Activated CD4-positive, alpha-beta T cell treated with anti-CD3 and anti-CD28 coated beads, Interleukin-2, amount 10 ng/mL, durations not matched to agents 24 days and 14 days (primary cell): ENCODE measurements at regions of chr2 and their contacts with region 1.

Region 1: DNA sequence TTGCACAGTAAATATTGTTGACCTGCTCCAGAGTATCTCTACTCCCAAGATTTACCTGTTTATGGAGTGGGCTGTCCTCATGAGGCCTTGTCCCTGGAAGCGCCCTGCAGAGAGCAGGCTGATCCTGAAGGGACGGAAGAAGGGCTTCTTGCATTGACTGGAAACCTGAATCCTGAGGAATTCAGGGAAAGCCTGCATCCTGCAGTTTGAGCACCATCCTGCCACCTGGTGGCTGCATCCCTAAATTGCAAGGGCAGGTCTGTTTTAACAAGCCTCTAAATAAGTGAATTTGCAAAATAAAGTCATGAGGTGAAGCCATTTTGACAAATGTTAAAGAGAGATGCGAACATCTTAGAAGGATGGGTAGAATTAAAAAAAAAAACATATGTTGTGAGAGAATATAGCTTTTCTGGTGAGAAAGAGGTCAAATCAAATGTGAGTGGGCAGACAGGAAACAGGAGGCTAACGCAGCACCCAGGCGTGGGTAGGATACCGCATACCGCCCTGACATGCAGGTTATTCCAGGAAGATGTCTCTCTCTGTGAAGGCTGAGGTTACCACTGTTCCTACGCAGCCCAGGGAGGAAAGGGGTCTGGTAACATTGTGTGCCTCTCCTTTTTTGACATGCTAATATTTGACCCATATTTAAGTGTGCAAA is 754.9 kb downstream of the RNF144A start:
- DNase-seq: peak; percentile 85
- H3K4me3 Mint-ChIP-seq: peak overlapping the region; percentile 70
- H3K27ac Mint-ChIP-seq: peak overlapping the region; percentile 98
- H3K4me1 Mint-ChIP-seq: peaks cover 60% of the 10 kb centered on the region
- H3K27me3 Mint-ChIP-seq: no peaks in the 10 kb centered on the region

Region 2: GRCh38 chr2:7437716-7438632 is 234.2 kb before region 1 on chr2:
- intact Hi-C with region 1: loop called (anchors 1 kb)
- DNase-seq: peak; percentile 75
- H3K4me3 Mint-ChIP-seq: peak overlapping the region; percentile 53
- H3K27ac Mint-ChIP-seq: peak overlapping the region; percentile 96
- H3K4me1 Mint-ChIP-seq: peaks cover 65% of the 10 kb centered on the region
- H3K27me3 Mint-ChIP-seq: no peaks in the 10 kb centered on the region

Region 3: DNA sequence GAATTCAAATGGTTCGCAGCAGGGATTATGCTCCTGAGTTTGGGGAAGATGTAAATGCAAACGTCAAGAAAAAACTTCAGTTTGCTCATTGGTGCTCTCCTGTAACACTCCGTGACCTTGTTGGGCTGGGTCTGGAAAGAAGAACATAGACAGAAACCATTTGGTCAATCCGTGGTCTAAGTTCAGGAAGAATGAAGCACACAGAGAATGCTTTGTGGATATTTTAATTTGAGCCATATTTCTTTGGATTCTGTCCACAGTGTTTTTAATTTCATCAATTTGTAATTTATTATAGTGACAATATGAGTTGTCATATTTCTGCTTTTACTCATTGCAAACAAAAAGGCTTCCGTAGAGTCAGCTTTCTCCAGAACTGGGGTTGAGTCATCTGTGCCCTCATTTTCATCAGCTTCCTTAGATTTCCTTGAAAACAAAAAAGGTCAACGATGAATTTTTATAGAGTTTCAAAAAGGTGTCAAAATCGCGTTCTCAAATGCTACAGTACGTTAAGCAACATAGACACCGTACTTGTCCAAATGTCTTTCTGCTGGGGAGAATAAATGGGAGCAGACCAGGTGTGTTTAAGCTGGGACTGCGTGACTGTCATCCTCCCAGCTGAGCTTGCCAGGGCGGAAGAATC is 148.6 kb before region 1 on chr2:
- intact Hi-C with region 1: loop called (anchors 2 kb)
- DNase-seq: no peak
- H3K4me3 Mint-ChIP-seq: peak overlapping the region; percentile 63
- H3K27ac Mint-ChIP-seq: peak overlapping the region; percentile 98
- H3K4me1 Mint-ChIP-seq: peaks cover 53% of the 10 kb centered on the region
- H3K27me3 Mint-ChIP-seq: no peaks in the 10 kb centered on the region

Region 4: DNA sequence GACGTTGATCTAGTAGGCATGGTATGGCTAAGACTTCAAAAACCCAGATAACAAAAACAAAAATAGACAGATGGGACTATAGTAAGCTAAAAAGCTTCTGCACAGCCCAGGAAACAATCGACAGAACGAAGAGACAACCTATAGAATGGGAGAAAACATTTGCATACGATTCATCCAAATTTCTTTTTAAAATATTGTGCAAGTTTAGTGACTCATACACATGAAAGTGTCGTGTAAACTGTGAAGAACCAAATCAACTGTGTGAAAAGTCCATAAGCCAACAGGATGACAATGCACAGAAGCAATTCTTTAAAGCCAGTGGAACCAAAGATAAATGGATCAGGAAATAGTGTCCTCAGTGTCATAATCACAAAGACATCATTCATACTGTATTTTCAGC is 83.9 kb before region 1 on chr2:
- intact Hi-C with region 1: loop called (anchors 5 kb)
- DNase-seq: peak; percentile 50
- H3K4me3 Mint-ChIP-seq: peak overlapping the region; percentile 2
- H3K27ac Mint-ChIP-seq: peak overlapping the region; percentile 68
- H3K4me1 Mint-ChIP-seq: peaks cover 22% of the 10 kb centered on the region
- H3K27me3 Mint-ChIP-seq: no peaks in the 10 kb centered on the region

Region 5: GRCh38 chr2:7633566-7634153 is 38.5 kb before region 1 on chr2:
- intact Hi-C with region 1: no loop called
- DNase-seq: no peak
- H3K4me3 Mint-ChIP-seq: no peak overlapping the region
- H3K27ac Mint-ChIP-seq: no peak overlapping the region
- H3K4me1 Mint-ChIP-seq: no peaks in the 10 kb centered on the region
- H3K27me3 Mint-ChIP-seq: no peaks in the 10 kb centered on the region

Region 6: DNA sequence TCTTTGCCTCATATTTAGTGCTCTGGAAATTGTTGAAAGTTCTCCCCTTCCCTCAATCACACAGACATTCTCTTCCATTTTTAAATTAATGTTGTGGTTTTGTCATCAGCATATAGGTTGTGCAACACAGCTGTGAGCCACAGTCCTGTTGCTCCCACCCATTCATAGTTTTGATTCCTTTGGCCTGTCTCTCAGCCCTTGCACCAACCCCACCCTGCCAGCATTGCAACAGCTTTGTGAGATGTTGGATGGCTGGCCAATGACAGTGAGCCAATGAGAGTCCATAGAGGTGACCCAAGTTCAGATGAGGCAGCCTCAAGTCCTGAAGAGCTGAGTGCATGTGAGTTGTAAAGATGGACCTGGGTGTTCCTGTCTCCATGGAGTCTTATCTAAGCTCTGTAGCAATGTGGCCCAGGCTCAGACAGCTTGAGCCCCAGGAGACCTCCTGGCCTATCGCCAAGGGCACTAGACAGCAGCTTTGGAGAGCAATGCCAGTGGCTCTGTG is 20.6 kb after region 1 on chr2:
- intact Hi-C with region 1: loop called (anchors 1 kb)
- DNase-seq: no peak
- H3K4me3 Mint-ChIP-seq: peak overlapping the region; percentile 68
- H3K27ac Mint-ChIP-seq: peak overlapping the region; percentile 91
- H3K4me1 Mint-ChIP-seq: peaks cover 42% of the 10 kb centered on the region
- H3K27me3 Mint-ChIP-seq: no peaks in the 10 kb centered on the region

Region 7: GRCh38 chr2:7758073-7758759 is 86.1 kb after region 1 on chr2:
- intact Hi-C with region 1: loop called (anchors 5 kb)
- DNase-seq: peak; percentile 43
- H3K4me3 Mint-ChIP-seq: peak overlapping the region; percentile 15
- H3K27ac Mint-ChIP-seq: peak overlapping the region; percentile 82
- H3K4me1 Mint-ChIP-seq: peaks cover 16% of the 10 kb centered on the region
- H3K27me3 Mint-ChIP-seq: no peaks in the 10 kb centered on the region

Region 8: GRCh38 chr2:7950035-7950612 is 278.0 kb after region 1 on chr2:
- intact Hi-C with region 1: no loop called
- DNase-seq: no peak
- H3K4me3 Mint-ChIP-seq: no peak overlapping the region
- H3K27ac Mint-ChIP-seq: no peak overlapping the region
- H3K4me1 Mint-ChIP-seq: no peaks in the 10 kb centered on the region
- H3K27me3 Mint-ChIP-seq: peaks cover 4% of the 10 kb centered on the region